ENCODE measurements at regions of chr5 and their contacts with region 1.

Region 1: DNA sequence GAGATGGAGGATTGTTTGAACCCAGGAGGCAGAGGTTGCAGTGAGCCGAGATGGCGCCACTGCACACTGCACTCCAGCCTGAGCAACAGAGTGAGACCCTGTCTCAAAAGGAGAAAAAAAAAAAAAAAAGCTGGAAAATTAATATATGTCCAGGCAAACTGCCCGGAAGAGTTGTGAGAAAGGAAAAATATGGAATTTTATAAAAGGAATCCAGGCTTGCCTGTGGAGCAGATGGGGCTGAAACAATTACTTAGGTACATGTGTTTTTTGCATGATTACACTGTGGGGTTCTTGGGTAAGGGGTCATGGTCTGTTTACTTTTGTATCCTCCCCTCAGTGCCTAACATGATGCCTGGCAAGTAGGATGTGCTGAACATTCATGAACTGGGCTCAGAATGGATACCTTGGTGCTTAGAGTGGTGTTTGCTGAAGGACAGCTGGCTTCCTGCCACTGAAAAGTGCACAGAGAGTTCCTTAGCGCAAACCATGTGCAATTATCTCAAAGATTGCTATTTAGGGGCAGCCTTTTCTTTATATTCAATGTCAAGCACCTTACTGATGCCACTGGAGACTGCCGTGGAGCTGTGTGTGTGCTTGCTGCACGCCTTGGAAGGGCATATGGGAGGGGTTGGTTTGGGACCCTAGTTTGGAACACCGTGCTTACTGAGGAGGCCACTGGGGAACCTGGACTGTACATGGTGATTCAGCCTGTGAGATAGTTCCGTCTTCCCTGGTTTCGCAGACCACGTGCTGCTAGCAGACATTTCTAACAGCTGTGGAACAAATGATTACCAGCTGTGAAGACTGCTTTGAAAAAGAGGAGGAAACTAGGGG is 78.4 kb downstream of the MAP1B start:
- DNase-seq: no peak
- ATAC-seq: no peak
- H3K4me3 ChIP-seq: no peak overlapping the region
- H3K27ac ChIP-seq: peak overlapping the region in 1 of 2 donors; percentile 78
- H3K4me1 ChIP-seq: peaks cover 11 to 21% of the 10 kb centered on the region in 2 donors
- H3K27me3 ChIP-seq: no peaks in the 10 kb centered on the region

Region 2: DNA sequence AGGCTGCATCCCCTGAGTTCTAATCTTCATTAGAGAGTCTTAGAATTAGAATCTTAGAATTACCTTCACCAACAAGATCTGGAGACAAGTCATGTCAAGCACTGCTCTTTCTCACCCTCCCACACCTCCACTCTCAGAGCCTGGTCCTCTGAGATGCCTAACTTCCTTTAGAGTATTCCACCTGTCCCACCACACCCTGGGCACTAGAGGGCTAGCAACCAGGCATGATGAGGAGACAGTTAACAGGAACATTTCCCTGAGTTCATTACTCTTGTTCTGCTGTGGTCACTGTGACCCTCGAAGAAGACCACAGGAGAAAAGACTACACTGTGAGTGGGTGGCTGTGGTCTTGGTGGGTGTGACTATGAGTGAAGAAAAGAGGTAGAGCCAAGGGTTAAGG is 103.7 kb before region 1 on chr5:
- intact Hi-C with region 1: no loop called
- DNase-seq: no peak
- ATAC-seq: no peak
- H3K4me3 ChIP-seq: no peak overlapping the region
- H3K27ac ChIP-seq: no peak overlapping the region
- H3K4me1 ChIP-seq: peaks cover 0 to 4% of the 10 kb centered on the region in 2 donors
- H3K27me3 ChIP-seq: no peaks in the 10 kb centered on the region

Region 3: DNA sequence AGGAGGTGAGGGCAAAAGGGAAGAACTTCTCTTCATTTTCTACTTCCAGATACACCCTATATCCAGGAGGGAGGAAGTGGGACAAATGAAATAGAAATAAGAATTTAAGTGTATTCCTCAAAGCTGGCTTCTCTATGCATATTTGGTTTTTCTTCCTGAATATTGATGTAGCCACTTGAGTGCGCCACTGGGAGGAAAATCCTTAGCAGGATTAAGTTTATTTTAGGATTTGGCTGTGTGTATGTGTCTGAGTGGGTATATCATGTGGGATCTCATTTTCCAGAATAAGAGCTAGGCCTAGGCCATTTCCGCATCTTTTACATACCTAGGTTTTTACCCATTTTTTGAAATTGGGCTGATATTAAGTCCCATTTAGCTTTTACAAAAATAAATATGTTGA is 36.0 kb before region 1 on chr5:
- intact Hi-C with region 1: loop called in 1 of 2 experiments (anchors 5 kb)
- DNase-seq: no peak
- ATAC-seq: no peak
- H3K4me3 ChIP-seq: no peak overlapping the region
- H3K27ac ChIP-seq: peak overlapping the region; percentile 87 to 99
- H3K4me1 ChIP-seq: peaks cover 20 to 36% of the 10 kb centered on the region in 2 donors
- H3K27me3 ChIP-seq: no peaks in the 10 kb centered on the region

Region 4: DNA sequence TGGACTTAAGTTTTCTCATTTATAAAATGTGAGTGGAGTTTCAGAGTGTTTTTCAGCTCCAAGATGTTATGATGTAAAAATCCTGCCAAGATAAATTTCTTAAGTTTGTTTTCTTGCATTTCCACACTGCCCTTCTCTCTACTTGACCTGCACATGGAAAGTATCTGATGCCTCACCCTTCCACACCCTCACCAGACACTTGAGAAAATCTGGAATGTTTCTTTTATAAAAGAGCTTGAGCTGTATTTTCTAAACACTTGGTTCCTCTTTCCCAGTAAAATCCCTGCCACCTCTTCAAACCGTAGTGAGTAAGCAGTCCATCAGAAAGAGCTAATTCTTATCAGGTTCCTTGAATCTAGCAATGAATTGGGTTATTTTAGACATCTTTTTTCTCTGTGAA is 1220.0 kb after region 1 on chr5:
- intact Hi-C with region 1: no loop called
- DNase-seq: no peak
- ATAC-seq: no peak
- H3K4me3 ChIP-seq: no peak overlapping the region
- H3K27ac ChIP-seq: no peak overlapping the region
- H3K4me1 ChIP-seq: no peaks in the 10 kb centered on the region
- H3K27me3 ChIP-seq: no peaks in the 10 kb centered on the region

Measured in aorta (tissue), 5 donors.